Panc1 (cell line): ENCODE measurements at regions of chr3 and their contacts with region 1.

Region 1: DNA sequence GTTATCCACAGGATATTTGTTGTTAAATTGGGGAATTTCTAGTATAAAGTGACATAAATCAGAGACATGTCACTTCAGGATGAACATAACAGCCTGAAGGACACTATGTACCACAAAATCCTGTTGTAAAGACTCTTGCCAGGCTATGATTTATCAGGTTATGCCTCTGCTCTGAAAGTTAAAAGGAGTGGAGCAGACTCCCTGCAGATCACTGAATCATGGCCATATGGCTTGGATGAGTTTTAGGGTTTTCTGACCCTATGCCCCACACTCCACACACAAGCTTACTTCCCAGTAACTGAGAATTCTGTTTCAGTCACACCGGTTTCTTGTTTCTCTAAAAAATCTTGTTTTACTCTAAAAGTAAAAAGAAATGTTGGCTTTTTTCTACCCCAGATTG is 869.4 kb downstream of the NAALADL2 start:
- DNase-seq: no peak
- ATAC-seq: no peak
- H3K4me3 ChIP-seq: no peak overlapping the region
- H3K27ac ChIP-seq: no peak overlapping the region
- H3K4me1 ChIP-seq: no peaks in the 10 kb centered on the region
- H3K27me3 ChIP-seq: no peaks in the 10 kb centered on the region
- CTCF ChIP-seq: no peak

Region 2: GRCh38 chr3:175105066-175105465 is 623.5 kb before region 1 on chr3:
- CTCF ChIA-PET with region 1: interaction called, 10 read pairs
- POLR2A ChIA-PET with region 1: no interaction called
- in situ Hi-C with region 1: no loop called
- intact Hi-C with region 1: no loop called
- DNase-seq: no peak
- ATAC-seq: no peak
- H3K4me3 ChIP-seq: no peak overlapping the region
- H3K27ac ChIP-seq: no peak overlapping the region
- H3K4me1 ChIP-seq: no peaks in the 10 kb centered on the region
- H3K27me3 ChIP-seq: no peaks in the 10 kb centered on the region
- CTCF ChIP-seq: no peak